BJ (cell line): ENCODE measurements at regions of chr6 and their contacts with region 1.

Region 1: DNA sequence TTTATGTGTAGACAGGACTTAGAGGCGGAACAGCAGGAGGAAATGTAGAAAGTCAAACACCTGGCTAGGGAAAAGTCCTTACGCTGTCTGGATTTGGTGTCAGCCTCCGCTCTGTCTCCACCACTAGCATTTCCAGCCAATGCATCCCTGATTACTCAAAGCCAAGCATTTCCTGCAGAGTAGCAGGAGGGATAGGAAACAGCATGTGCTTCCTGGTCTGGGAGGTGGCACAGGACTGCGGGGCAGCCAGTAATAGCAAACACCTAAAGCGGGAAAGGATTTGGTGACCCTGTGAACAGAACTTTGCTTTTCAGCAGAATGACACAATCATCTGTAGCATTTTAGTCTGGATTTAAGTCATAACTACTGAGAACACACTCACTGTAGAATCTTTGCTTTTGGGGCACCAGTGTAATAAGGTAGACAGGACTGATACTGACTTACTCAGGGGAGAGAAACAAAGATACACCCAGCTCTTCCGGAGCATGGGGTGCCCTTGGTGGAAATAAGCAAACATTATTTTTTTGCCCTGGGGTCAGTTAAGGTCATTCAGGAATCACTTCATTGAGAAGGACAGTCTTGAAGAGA is 133.3 kb upstream of the AHI1 start:
- DNase-seq: no peak
- H3K4me3 ChIP-seq: no peak overlapping the region
- H3K27me3 ChIP-seq: no peaks in the 10 kb centered on the region
- CTCF ChIP-seq: no peak

Region 2: GRCh38 chr6:134347916-134348805 is 1282.7 kb before region 1 on chr6:
- CTCF ChIA-PET with region 1: no interaction called
- POLR2A ChIA-PET with region 1: interaction called, 10 read pairs
- DNase-seq: peak; percentile 28
- H3K4me3 ChIP-seq: no peak overlapping the region
- H3K27me3 ChIP-seq: no peaks in the 10 kb centered on the region
- CTCF ChIP-seq: no peak

Region 3: DNA sequence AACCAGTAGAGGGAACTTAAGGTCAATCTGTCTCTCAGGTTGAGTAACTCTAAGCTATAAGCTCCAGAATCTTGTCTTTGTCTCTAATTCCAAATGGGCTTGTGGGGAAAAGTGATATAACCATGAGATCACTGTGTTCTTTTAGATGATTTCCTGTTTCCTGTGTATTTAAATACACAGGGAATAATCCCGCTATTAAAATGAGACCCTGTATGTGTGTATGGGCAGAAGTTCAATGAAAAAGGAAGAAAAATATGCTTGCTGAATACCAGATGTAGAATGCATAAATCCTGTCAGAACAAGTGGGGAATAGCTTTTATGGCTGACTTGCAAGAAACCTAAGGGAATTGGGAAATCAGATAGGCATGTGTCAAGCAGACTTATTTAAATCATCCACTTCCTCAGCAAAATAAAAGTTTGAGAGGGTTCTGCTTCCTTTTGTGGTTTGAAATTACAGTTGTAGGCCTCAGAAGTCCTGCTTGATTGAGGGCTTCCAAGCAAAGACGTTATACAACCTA is 56.0 kb after region 1 on chr6:
- CTCF ChIA-PET with region 1: no interaction called
- POLR2A ChIA-PET with region 1: no interaction called
- DNase-seq: no peak
- H3K4me3 ChIP-seq: no peak overlapping the region
- H3K27me3 ChIP-seq: no peaks in the 10 kb centered on the region
- CTCF ChIP-seq: no peak